ENCODE measurements at regions of chr4 and their contacts with region 1.

Region 1: GRCh38 chr4:23195164-23195563 is 502.4 kb downstream of the GBA3 start:
- DNase-seq: no peak
- ATAC-seq: no peak
- H3K4me3 ChIP-seq: no peak overlapping the region
- H3K4me3 Mint-ChIP-seq: no peak overlapping the region
- H3K27ac ChIP-seq: no peak overlapping the region
- H3K27ac Mint-ChIP-seq: no peak overlapping the region
- H3K4me1 ChIP-seq: no peaks in the 10 kb centered on the region
- H3K4me1 Mint-ChIP-seq: no peaks in the 10 kb centered on the region
- H3K27me3 ChIP-seq: no peaks in the 10 kb centered on the region
- H3K27me3 Mint-ChIP-seq: peaks cover 0 to 4% of the 10 kb centered on the region in 2 donors

Region 2: GRCh38 chr4:23122666-23123400 is 72.3 kb before region 1 on chr4:
- CTCF ChIA-PET with region 1: no interaction called
- POLR2A ChIA-PET with region 1: no interaction called
- DNase-seq: no peak
- ATAC-seq: no peak
- H3K4me3 ChIP-seq: no peak overlapping the region
- H3K4me3 Mint-ChIP-seq: no peak overlapping the region
- H3K27ac ChIP-seq: no peak overlapping the region
- H3K27ac Mint-ChIP-seq: no peak overlapping the region
- H3K4me1 ChIP-seq: no peaks in the 10 kb centered on the region
- H3K4me1 Mint-ChIP-seq: no peaks in the 10 kb centered on the region
- H3K27me3 ChIP-seq: no peaks in the 10 kb centered on the region
- H3K27me3 Mint-ChIP-seq: no peaks in the 10 kb centered on the region

Region 3: DNA sequence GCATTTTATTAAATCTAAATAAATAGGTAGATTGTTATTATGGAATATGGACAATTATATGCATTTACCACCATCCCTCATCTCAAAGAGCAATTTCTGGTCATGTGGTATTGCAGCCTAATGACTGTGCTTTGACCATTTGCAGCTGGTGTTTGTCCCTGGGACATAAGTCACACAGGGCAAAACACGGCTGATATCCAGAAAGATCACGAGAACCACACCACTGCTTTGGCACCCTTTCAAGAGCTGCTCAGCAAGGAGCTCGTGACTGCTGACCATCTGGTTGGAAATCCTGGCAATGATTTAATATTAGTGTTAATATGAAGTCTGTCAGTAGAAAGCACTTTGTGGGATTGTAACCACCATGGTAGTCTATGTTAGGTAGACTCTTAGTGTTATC is 42.6 kb after region 1 on chr4:
- CTCF ChIA-PET with region 1: interaction called in 1 of 2 experiments, 10 read pairs
- POLR2A ChIA-PET with region 1: interaction called in 1 of 2 experiments, 3 read pairs
- DNase-seq: no peak
- ATAC-seq: no peak
- H3K4me3 ChIP-seq: no peak overlapping the region
- H3K4me3 Mint-ChIP-seq: no peak overlapping the region
- H3K27ac ChIP-seq: no peak overlapping the region
- H3K27ac Mint-ChIP-seq: no peak overlapping the region
- H3K4me1 ChIP-seq: no peaks in the 10 kb centered on the region
- H3K4me1 Mint-ChIP-seq: no peaks in the 10 kb centered on the region
- H3K27me3 ChIP-seq: no peaks in the 10 kb centered on the region
- H3K27me3 Mint-ChIP-seq: no peaks in the 10 kb centered on the region

Region 4: GRCh38 chr4:23297327-23297726 is 102.2 kb after region 1 on chr4:
- CTCF ChIA-PET with region 1: no interaction called
- POLR2A ChIA-PET with region 1: no interaction called
- DNase-seq: no peak
- ATAC-seq: no peak
- H3K4me3 ChIP-seq: no peak overlapping the region
- H3K4me3 Mint-ChIP-seq: no peak overlapping the region
- H3K27ac ChIP-seq: no peak overlapping the region
- H3K27ac Mint-ChIP-seq: no peak overlapping the region
- H3K4me1 ChIP-seq: peaks cover under 1 to 1% of the 10 kb centered on the region in 2 experiments
- H3K4me1 Mint-ChIP-seq: peaks cover 1 to 8% (median 5%) of the 10 kb centered on the region in 3 donors
- H3K27me3 ChIP-seq: no peaks in the 10 kb centered on the region
- H3K27me3 Mint-ChIP-seq: no peaks in the 10 kb centered on the region